ENCODE measurements at regions of chr6 and their contacts with region 1.

Region 1: DNA sequence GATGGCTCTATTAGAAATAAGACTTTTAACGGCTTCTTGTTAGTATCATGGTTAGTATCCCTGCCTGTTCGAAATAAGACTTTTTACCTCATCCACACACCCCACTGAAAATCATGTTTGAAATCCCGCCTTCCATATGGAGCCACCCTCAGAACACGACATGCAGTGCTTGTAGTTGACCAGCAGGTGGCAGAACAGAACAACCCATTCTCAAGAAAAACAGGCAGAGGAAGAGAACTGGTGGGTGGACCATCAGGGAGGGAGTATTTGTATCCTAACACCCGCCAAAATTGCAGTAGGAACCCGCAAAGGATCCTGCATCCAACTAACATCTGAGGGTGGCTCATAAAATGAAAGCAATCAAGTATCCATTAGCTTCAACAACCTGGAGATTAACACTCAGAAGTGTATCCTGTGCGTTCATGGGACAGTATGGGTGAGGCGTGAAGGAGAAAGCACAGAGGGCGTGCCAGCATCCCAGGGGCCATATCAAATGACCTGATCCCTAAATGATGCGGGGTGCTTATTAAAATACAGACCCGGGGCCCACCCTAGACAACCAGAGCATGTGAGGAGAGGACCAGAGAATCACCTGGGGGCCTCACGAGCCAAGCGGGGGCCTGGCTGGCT is 89.6 kb upstream of the NHSL1 start:
- DNase-seq: peak; percentile 30
- ATAC-seq: peak; percentile 20
- H3K4me3 ChIP-seq: no peak overlapping the region
- H3K27ac ChIP-seq: no peak overlapping the region
- H3K4me1 ChIP-seq: peaks cover 11% of the 10 kb centered on the region; the same call in 1 of the 2 replicates
- H3K27me3 ChIP-seq: no peaks in the 10 kb centered on the region
- CTCF ChIP-seq: peak; percentile 90 to 93 (median 93); a peak in 5 of 6 replicates
- EP300 ChIP-seq: no peak
- POLR2A ChIP-seq: no peak
- RAD21 ChIP-seq: peak; percentile 96

Region 2: GRCh38 chr6:138115877-138116660 is 472.9 kb before region 1 on chr6:
- CTCF ChIA-PET with region 1: interaction called, 39 read pairs
- POLR2A ChIA-PET with region 1: no interaction called
- RAD21 ChIA-PET with region 1: interaction called, 3 read pairs
- SMC1A ChIA-PET with region 1: interaction called, 11 read pairs
- in situ Hi-C with region 1: no loop called
- intact Hi-C with region 1: loop called (anchors 2 kb)
- DNase-seq: peak; percentile 33
- ATAC-seq: peak; percentile 97
- H3K4me3 ChIP-seq: no peak overlapping the region
- H3K27ac ChIP-seq: no peak overlapping the region
- H3K4me1 ChIP-seq: no peaks in the 10 kb centered on the region
- H3K27me3 ChIP-seq: peaks cover 0 to 2% of the 10 kb centered on the region in 2 experiments; a peak in 1 of 4 replicates
- CTCF ChIP-seq: peak; percentile 53 to 86 (median 64); a peak in 5 of 6 replicates
- EP300 ChIP-seq: no peak
- POLR2A ChIP-seq: no peak
- RAD21 ChIP-seq: peak; percentile 82

Region 3: GRCh38 chr6:138517635-138518034 is 71.3 kb before region 1 on chr6:
- CTCF ChIA-PET with region 1: interaction called, 70 read pairs
- POLR2A ChIA-PET with region 1: interaction called, 3 read pairs
- RAD21 ChIA-PET with region 1: no interaction called
- SMC1A ChIA-PET with region 1: interaction called, 5 read pairs
- in situ Hi-C with region 1: no loop called
- intact Hi-C with region 1: loop called (anchors 5 kb)
- DNase-seq: no peak
- ATAC-seq: peak; percentile 77
- H3K4me3 ChIP-seq: no peak overlapping the region
- H3K27ac ChIP-seq: no peak overlapping the region
- H3K4me1 ChIP-seq: no peaks in the 10 kb centered on the region; the same call in 1 of the 2 replicates
- H3K27me3 ChIP-seq: 0 out of 4 replicates have a peak, but pooled peaks cover 0 to 2% of the 10 kb centered on the region in 2 experiments
- CTCF ChIP-seq: peak; percentile 47 to 80 (median 75)
- EP300 ChIP-seq: no peak
- POLR2A ChIP-seq: no peak
- RAD21 ChIP-seq: peak; percentile 63

Region 4: DNA sequence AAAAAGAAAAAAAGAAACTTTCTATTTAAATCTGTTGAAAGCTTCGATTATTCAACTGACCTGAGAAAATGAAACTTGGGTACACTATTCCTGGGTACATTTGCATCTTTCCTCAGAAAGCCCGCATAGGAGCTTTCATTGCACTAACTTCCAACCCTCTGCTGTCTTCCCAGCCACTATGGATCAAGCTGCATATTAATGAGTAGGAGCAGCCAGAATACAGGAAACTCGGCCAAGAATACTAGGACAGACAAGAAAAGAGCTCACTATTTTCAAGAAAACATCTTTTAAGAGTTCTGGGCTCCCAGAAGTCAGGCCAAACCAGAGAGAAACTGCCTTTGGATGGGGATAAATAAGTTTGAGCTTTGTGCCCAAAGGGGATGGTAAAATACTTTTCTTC is 49.7 kb after region 1 on chr6:
- CTCF ChIA-PET with region 1: interaction called, 26 read pairs
- POLR2A ChIA-PET with region 1: interaction called, 11 read pairs
- RAD21 ChIA-PET with region 1: interaction called, 19 read pairs
- SMC1A ChIA-PET with region 1: interaction called, 24 read pairs
- in situ Hi-C with region 1: no loop called
- intact Hi-C with region 1: loop called (anchors 2 kb)
- DNase-seq: no peak
- ATAC-seq: no peak; the same call in 1 of the 3 replicates
- H3K4me3 ChIP-seq: peak overlapping the region; percentile 52; the same call in 1 of the 2 replicates
- H3K27ac ChIP-seq: no peak overlapping the region
- H3K4me1 ChIP-seq: no peaks in the 10 kb centered on the region
- H3K27me3 ChIP-seq: no peaks in the 10 kb centered on the region
- CTCF ChIP-seq: no peak
- EP300 ChIP-seq: no peak
- POLR2A ChIP-seq: no peak
- RAD21 ChIP-seq: no peak

Region 5: DNA sequence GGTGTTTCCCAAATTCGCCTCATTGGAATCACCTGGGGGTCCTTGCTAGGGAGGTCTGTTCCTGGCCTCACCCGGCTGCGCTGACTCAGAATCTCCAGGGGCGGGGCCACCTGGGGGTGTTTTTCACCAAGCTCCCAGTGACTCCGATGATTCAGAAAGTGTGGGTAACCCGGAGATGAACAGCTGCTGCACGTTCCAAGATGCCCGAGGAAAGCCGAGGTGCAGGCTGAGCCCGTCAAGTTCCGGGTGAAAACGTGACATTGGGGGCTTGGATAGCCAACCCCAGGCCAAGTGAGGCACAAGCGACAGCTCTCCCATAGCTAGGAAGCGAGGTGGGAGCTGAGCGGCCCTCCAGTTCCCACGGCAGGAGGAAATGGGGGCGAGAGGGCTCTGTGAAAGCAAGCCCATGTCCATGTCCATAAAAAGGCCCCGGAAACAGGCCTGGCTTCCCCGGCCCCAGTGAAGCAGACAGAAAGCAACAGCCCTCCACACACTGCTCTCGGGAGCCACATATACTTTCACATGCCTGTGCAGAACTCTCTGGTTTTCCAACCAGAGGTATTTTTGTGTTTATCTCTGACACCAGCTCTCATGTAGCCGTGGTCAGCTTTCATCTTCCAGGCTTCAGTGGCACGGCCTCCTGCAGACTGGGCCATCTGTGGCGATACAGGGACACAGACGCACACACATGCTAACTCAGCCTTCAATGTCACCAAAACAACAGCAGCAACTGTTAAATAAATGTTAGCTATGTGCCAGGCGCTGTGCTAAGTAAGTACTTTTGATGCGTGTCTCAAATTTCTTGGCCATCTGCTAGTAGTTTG is 94.0 kb after region 1 on chr6:
- CTCF ChIA-PET with region 1: interaction called, 89 read pairs
- POLR2A ChIA-PET with region 1: interaction called, 5 read pairs
- RAD21 ChIA-PET with region 1: interaction called, 5 read pairs
- SMC1A ChIA-PET with region 1: interaction called, 11 read pairs
- in situ Hi-C with region 1: no loop called
- intact Hi-C with region 1: no loop called
- DNase-seq: no peak
- ATAC-seq: no peak
- H3K4me3 ChIP-seq: no peak overlapping the region
- H3K27ac ChIP-seq: no peak overlapping the region
- H3K4me1 ChIP-seq: no peaks in the 10 kb centered on the region
- H3K27me3 ChIP-seq: no peaks in the 10 kb centered on the region
- CTCF ChIP-seq: no peak
- EP300 ChIP-seq: no peak
- POLR2A ChIP-seq: no peak
- RAD21 ChIP-seq: no peak

Region 6: DNA sequence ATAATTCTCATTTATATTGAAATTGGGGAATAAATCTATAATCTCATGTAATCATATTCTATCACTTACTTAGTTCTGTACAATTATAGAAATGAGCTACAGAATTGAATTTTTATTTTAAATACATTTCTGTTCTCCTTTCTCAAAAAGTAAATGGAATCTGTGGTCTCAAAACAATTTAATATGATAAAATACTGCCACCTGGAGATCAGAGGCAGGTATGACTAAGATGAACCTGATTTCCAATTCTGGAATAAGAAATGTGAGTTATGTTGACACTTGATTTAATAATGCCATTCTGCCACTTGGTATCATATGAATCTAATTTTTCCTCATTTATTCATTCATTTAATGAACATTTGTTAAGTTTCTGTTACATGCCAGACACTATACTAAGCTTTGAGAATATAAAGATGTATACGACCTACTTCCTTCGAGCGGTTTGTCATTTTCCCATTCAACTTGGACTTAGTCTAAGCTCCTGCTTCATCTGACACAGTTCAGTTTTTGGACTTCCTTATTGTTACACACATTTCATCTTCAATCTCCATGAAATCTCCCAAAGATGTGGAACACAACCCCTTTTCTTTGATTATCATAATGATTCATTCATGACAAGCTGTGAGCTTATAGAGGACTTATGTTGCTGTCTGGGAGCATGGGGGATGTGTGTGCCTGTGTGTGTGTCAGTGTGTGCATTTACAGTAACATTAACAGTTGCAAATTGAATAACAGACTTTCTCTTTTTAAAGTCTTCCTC is 177.2 kb after region 1 on chr6:
- CTCF ChIA-PET with region 1: interaction called, 418 read pairs
- POLR2A ChIA-PET with region 1: interaction called, 5 read pairs
- RAD21 ChIA-PET with region 1: interaction called, 115 read pairs
- SMC1A ChIA-PET with region 1: interaction called, 332 read pairs
- in situ Hi-C with region 1: loop called (anchors 5 kb)
- intact Hi-C with region 1: loop called (anchors 1 kb)
- DNase-seq: no peak
- ATAC-seq: 0 out of 3 replicates have a peak, but pooled peaks have one; percentile 17
- H3K4me3 ChIP-seq: no peak overlapping the region
- H3K27ac ChIP-seq: no peak overlapping the region
- H3K4me1 ChIP-seq: peaks cover 12% of the 10 kb centered on the region
- H3K27me3 ChIP-seq: no peaks in the 10 kb centered on the region
- CTCF ChIP-seq: peak; percentile 39 to 64 (median 50); a peak in 5 of 6 replicates
- EP300 ChIP-seq: no peak
- POLR2A ChIP-seq: no peak
- RAD21 ChIP-seq: peak; percentile 78

Region 7: DNA sequence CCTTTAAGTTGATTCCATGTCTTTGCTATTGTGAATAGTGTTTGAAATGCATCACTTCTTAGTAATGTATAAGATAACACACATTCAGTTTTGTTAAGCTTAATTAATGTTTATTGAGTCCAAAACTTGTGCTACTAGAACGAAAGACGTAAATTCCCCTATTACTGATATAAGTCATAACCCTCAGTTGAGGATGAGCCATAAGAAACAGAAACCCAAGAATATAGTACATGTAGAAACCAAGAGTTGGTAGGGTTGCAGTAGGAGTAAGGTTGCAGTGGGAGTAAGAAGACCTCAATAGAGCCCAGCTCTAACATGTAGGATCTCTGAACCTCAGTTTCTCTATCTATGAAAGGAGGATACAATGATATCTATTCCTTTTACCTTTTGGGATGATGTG is 766.3 kb after region 1 on chr6:
- CTCF ChIA-PET with region 1: no interaction called
- POLR2A ChIA-PET with region 1: no interaction called
- RAD21 ChIA-PET with region 1: no interaction called
- SMC1A ChIA-PET with region 1: no interaction called
- in situ Hi-C with region 1: loop called (anchors 10 kb)
- intact Hi-C with region 1: no loop called
- DNase-seq: no peak
- ATAC-seq: peak; percentile 80
- H3K4me3 ChIP-seq: no peak overlapping the region
- H3K27ac ChIP-seq: no peak overlapping the region
- H3K4me1 ChIP-seq: no peaks in the 10 kb centered on the region
- H3K27me3 ChIP-seq: no peaks in the 10 kb centered on the region
- CTCF ChIP-seq: no peak
- EP300 ChIP-seq: no peak
- POLR2A ChIP-seq: no peak
- RAD21 ChIP-seq: no peak